ENCODE measurements at regions of chr19 and their contacts with region 1.

Region 1: DNA sequence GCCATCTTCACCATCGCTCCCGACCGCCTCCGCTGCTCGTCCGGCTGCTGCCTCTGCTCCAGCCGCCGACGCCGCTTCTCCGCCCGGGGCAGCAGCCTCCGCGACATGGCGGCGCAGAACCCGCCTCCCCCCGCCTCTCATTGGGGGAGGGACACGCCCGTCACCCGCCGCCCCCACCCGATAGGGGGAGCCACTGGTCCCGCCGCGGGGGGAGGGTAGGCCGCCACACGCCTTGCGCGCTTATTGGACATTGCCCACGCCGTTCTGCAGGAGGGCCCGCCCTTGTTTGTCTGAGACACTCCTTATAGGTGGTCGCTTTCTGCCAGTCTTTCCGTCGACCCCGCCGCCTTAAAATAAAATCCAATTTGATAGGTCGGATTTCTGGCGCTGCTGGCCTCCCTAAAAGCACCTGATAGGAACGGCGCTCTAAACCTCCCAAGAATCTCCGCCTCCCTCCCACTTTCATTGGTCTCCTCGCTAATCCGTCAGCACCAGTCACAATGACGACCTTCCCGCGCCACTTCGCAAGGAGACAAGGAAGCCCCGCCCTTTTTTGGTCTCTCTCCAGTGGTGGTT is at the start of gene HNRNPL:
- DNase-seq: peak; percentile 98 to 100 (median 99)
- ATAC-seq: peak; percentile 69
- H3K4me3 ChIP-seq: peak within 1 kb of the TSS; percentile 76
- H3K4me3 Mint-ChIP-seq: peak within 1 kb of the TSS; percentile 98
- H3K27ac ChIP-seq: peak within 1 kb of the TSS; percentile 95 to 97
- H3K27ac Mint-ChIP-seq: peak within 1 kb of the TSS; percentile 97
- H3K4me1 ChIP-seq: peaks cover 66% of the 10 kb centered on the region
- H3K4me1 Mint-ChIP-seq: peaks cover 63% of the 10 kb centered on the region
- H3K27me3 ChIP-seq: no peaks in the 10 kb centered on the region
- H3K27me3 Mint-ChIP-seq: no peaks in the 10 kb centered on the region
- CTCF ChIP-seq: peak; percentile 16
- total RNA-seq, gene HNRNPL: 535 to 565 TPM

Region 2: DNA sequence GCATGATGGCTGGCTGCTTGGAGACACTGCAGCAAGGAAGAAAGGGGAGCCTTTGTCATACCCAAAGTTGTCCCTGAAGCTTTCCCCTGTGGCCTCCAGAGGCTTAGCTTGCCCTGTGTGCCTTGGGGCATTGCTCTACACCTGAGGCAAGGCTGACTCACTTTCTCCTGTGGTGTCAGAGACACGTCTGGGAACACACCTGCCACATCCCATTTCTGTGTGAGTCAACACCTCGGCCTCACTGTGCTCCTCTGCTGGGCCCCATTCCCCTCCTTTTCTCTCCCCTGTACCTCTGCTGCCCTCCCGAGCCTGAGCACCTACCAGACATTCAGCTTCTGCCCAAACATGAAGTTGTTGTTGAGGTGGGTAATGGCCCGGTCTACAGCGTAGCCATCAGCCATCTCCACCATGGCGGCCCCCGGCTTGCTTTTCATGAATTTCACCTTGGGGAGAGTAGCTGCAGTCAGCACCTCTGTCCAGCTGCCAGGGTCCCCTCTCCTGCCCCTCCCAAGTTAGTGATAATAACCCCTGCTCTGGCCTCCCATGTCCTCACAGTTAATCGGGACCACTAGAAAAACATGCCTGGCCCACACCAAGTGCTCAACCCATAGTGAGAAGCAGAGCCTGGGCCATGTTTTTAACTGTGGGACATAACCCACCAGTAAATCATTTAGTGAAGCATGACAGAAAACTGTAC is 11.2 kb before region 1 on chr19:
- CTCF ChIA-PET with region 1: interaction called, 3 read pairs
- POLR2A ChIA-PET with region 1: interaction called, 61 read pairs
- intact Hi-C with region 1: loop called in 1 of 2 experiments (anchors 1 kb)
- DNase-seq: peak in 5 of 14 experiments; percentile 29 to 60 (median 33)
- ATAC-seq: no peak
- H3K4me3 ChIP-seq: no peak overlapping the region
- H3K4me3 Mint-ChIP-seq: no peak overlapping the region
- H3K27ac ChIP-seq: no peak overlapping the region
- H3K27ac Mint-ChIP-seq: peak overlapping the region; percentile 55
- H3K4me1 ChIP-seq: peaks cover 42% of the 10 kb centered on the region
- H3K4me1 Mint-ChIP-seq: peaks cover 39% of the 10 kb centered on the region
- H3K27me3 ChIP-seq: no peaks in the 10 kb centered on the region
- H3K27me3 Mint-ChIP-seq: peaks cover 5% of the 10 kb centered on the region
- CTCF ChIP-seq: no peak

Region 3: GRCh38 chr19:38921420-38922274 is 71.7 kb after region 1 on chr19:
- CTCF ChIA-PET with region 1: no interaction called
- POLR2A ChIA-PET with region 1: no interaction called
- intact Hi-C with region 1: no loop called
- DNase-seq: no peak
- ATAC-seq: no peak
- H3K4me3 ChIP-seq: no peak overlapping the region
- H3K4me3 Mint-ChIP-seq: no peak overlapping the region
- H3K27ac ChIP-seq: no peak overlapping the region
- H3K27ac Mint-ChIP-seq: no peak overlapping the region
- H3K4me1 ChIP-seq: peaks cover 3% of the 10 kb centered on the region
- H3K4me1 Mint-ChIP-seq: no peaks in the 10 kb centered on the region
- H3K27me3 ChIP-seq: no peaks in the 10 kb centered on the region
- H3K27me3 Mint-ChIP-seq: no peaks in the 10 kb centered on the region
- CTCF ChIP-seq: no peak

Region 4: DNA sequence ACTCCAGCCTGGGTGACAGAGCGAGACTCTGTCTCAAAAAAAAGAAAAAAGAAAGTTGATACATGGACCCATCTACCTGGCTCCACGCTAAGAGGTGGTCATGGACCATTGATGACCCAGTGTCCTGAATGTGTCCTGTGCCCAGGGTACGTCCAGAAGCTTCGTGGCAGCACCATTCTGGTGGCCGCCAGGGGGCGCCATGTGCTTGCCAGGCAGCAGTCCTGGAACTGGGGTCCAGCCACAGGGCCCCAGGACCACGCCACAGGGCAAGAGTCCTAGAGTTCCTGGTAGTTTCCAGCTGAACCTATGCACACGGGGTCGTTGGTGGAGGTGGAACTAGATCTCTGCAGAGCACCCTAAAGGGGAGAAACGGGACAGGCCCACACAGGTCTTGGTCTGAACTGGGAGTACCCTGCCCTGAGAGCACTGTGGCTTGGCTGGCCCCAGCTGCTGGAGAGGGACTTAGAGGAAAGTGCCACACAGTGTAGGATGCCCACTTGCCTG is 202.3 kb after region 1 on chr19:
- CTCF ChIA-PET with region 1: no interaction called
- POLR2A ChIA-PET with region 1: no interaction called
- intact Hi-C with region 1: no loop called
- DNase-seq: peak; percentile 46 to 83 (median 66)
- ATAC-seq: peak; percentile 41
- H3K4me3 ChIP-seq: no peak overlapping the region
- H3K4me3 Mint-ChIP-seq: no peak overlapping the region
- H3K27ac ChIP-seq: no peak overlapping the region
- H3K27ac Mint-ChIP-seq: no peak overlapping the region
- H3K4me1 ChIP-seq: peaks cover 6% of the 10 kb centered on the region
- H3K4me1 Mint-ChIP-seq: no peaks in the 10 kb centered on the region
- H3K27me3 ChIP-seq: no peaks in the 10 kb centered on the region
- H3K27me3 Mint-ChIP-seq: peaks cover 4% of the 10 kb centered on the region
- CTCF ChIP-seq: peak; percentile 88